ENCODE measurements at regions of chr2 and their contacts with region 1.

Region 1: DNA sequence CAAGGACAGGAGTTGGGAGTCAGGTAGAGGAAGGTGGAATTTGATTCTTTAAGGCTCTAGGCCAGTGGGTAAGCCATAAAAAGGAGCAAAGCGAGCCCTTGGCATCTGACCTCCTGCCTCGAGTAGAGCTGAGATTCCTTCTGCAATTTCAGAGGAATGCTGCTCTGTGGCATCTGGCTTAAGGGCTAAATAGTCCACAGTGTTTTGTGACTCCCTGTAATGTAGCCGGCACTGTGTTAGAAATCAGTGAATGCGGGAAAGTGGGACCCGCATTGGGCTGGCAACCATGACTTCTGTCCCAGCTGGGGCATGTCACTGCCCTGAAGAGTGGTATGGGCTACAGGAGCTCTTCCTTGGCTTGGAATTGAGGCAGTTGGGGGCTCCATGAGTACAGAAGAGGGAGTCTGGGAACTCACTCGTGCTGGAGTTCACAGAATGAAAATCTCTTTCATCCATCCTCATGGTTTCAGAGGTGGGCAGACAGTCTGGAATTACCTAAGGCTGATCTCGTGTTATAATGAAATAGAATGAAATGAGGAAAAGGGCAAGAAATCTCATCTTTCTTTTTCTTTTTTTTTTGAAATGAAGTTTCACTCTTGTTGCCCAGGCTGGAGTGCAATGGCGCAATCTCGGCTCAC is 12.7 kb upstream of the MYCN start:
- DNase-seq: no peak
- H3K4me3 ChIP-seq: no peak overlapping the region
- H3K27ac ChIP-seq: no peak overlapping the region
- H3K4me1 ChIP-seq: peaks cover 0 to 3% (median under 1%) of the 10 kb centered on the region in 4 experiments; a peak in 1 of 7 replicates
- H3K27me3 ChIP-seq: no peaks in the 10 kb centered on the region
- CTCF ChIP-seq: no peak
- EP300 ChIP-seq: no peak
- POLR2A ChIP-seq: no peak
- RAD21 ChIP-seq: no peak

Region 2: DNA sequence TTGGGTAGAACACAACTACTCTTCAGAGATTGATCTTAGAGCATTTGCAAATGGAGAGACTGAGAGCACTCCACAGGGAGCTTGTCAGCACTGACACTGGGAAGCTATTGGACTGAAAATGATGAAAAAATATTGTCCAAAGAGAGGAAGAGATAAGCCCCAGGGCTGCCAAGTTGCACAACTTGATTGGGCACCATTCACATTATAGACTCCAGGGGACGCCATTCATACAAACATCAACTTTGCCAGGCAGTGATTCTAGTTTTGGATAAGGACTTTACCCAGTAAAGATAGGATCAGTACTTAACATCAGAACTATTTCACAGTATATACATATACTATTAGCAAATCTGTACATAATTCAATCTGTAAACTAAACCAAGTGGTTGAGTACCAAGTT is 66.9 kb before region 1 on chr2:
- CTCF ChIA-PET with region 1: interaction called, 10 read pairs
- POLR2A ChIA-PET with region 1: no interaction called
- DNase-seq: no peak
- H3K4me3 ChIP-seq: no peak overlapping the region
- H3K27ac ChIP-seq: no peak overlapping the region
- H3K4me1 ChIP-seq: peaks cover 0 to 6% (median 0%) of the 10 kb centered on the region in 4 experiments; a peak in 1 of 7 replicates
- H3K27me3 ChIP-seq: no peaks in the 10 kb centered on the region
- CTCF ChIP-seq: peak in 2 of 3 experiments; percentile 46 to 68; a peak in 2 of 4 replicates
- EP300 ChIP-seq: no peak
- POLR2A ChIP-seq: no peak
- RAD21 ChIP-seq: peak; percentile 71 to 73

Measured in H1 (cell line).